CD4-positive, alpha-beta T cell (primary cell): ENCODE measurements at regions of chr10 and their contacts with region 1.

Region 1: DNA sequence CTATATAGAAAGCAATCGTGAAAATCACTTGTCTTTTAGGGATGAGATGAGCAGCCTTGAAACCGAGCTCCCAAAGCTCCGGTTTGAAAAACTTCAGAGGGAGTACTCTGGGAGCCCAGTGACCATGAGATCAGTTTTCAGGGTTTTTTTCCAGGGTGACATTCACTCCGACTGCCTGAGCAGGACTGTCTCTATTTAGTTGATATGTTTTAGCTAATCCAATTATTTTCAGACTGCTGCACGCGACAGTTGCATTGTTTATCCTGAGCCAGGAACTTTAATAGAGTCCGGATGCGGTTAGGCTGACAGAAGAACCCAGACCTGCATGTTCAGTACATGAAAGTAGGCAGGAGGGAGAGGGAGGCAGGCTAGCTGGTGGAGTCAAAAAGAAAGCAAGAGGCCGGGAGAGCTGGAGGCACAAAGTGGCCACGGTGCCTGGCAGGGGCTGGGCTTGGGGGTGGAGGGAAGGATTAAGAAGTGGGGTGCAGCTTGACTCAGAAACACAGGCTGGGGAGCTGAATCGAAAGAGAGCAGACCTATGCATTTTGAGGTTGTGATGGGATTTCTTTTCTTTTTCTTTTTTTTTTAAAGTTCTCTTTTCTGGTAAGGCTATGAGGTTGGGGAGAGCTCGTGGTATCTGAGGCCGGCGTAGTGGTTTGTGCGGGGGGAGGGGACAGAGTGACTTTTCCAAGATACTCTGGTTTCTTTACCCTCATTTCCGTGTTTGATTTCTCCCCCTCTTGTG is 5.6 kb downstream of the GATA3 start:
- DNase-seq: peak in 10 of 14 experiments; percentile 47 to 88 (median 63)
- ATAC-seq: peak; percentile 51
- H3K4me3 ChIP-seq: peak overlapping the region; percentile 96
- H3K4me3 Mint-ChIP-seq: peak overlapping the region; percentile 94
- H3K27ac ChIP-seq: peak overlapping the region; percentile 69 to 76
- H3K27ac Mint-ChIP-seq: peak overlapping the region; percentile 97
- H3K4me1 ChIP-seq: peaks cover 73% of the 10 kb centered on the region
- H3K4me1 Mint-ChIP-seq: peaks cover 81% of the 10 kb centered on the region
- H3K27me3 ChIP-seq: no peaks in the 10 kb centered on the region
- H3K27me3 Mint-ChIP-seq: no peaks in the 10 kb centered on the region
- CTCF ChIP-seq: no peak

Region 2: GRCh38 chr10:7818295-7819122 is 241.6 kb before region 1 on chr10 and contains the start of gene TAF3:
- CTCF ChIA-PET with region 1: no interaction called
- POLR2A ChIA-PET with region 1: no interaction called
- intact Hi-C with region 1: loop called in 1 of 2 experiments (anchors 5 kb)
- DNase-seq: peak; percentile 86 to 95 (median 91)
- ATAC-seq: peak; percentile 93
- H3K4me3 ChIP-seq: peak within 1 kb of the TSS; percentile 99
- H3K4me3 Mint-ChIP-seq: peak within 1 kb of the TSS; percentile 97
- H3K27ac ChIP-seq: peak within 1 kb of the TSS; percentile 29 to 50
- H3K27ac Mint-ChIP-seq: peak within 1 kb of the TSS; percentile 80
- H3K4me1 ChIP-seq: peaks cover 25% of the 10 kb centered on the region
- H3K4me1 Mint-ChIP-seq: peaks cover 48% of the 10 kb centered on the region
- H3K27me3 ChIP-seq: peaks cover 0 to 8% of the 10 kb centered on the region in 2 experiments
- H3K27me3 Mint-ChIP-seq: peaks cover 5% of the 10 kb centered on the region
- CTCF ChIP-seq: no peak
- total RNA-seq, gene TAF3: 12.6 to 12.8 TPM

Region 3: GRCh38 chr10:8073691-8074391 is 13.7 kb after region 1 on chr10:
- CTCF ChIA-PET with region 1: interaction called, 5 read pairs
- POLR2A ChIA-PET with region 1: interaction called, 15 read pairs
- intact Hi-C with region 1: loop called in 1 of 2 experiments (anchors 2 kb)
- DNase-seq: no peak
- ATAC-seq: no peak
- H3K4me3 ChIP-seq: no peak overlapping the region
- H3K4me3 Mint-ChIP-seq: no peak overlapping the region
- H3K27ac ChIP-seq: no peak overlapping the region
- H3K27ac Mint-ChIP-seq: peak overlapping the region; percentile 10
- H3K4me1 ChIP-seq: peaks cover 29% of the 10 kb centered on the region
- H3K4me1 Mint-ChIP-seq: peaks cover 68% of the 10 kb centered on the region
- H3K27me3 ChIP-seq: no peaks in the 10 kb centered on the region
- H3K27me3 Mint-ChIP-seq: no peaks in the 10 kb centered on the region
- CTCF ChIP-seq: no peak

Region 4: DNA sequence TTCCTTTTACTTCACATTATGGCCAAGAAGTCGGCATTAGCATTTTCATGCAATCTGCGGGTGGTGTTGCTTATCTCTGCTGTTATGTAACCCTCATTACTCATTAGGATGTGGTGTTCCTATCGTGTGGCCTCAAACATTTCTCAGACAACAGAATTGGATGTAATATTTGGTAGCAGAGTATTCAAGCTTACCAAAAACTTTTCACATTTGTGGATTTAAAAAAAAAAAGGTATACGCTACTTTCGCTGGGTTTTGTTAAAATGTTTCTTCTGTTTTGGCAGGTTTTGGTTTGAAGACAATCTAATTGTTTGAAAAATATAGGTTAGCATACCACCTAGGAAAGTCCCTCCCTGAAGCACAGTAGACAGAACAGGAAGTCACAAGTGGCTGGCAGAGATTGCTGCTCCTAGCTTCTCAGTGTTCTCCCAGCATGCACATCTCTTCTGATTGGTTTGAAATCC is 123.1 kb after region 1 on chr10:
- CTCF ChIA-PET with region 1: no interaction called
- POLR2A ChIA-PET with region 1: interaction called, 19 read pairs
- intact Hi-C with region 1: loop called in 1 of 2 experiments (anchors 5 kb)
- DNase-seq: peak in 12 of 14 experiments; percentile 8 to 90 (median 26)
- ATAC-seq: peak; percentile 92
- H3K4me3 ChIP-seq: peak overlapping the region; percentile 6
- H3K4me3 Mint-ChIP-seq: peak overlapping the region; percentile 72
- H3K27ac ChIP-seq: peak overlapping the region; percentile 29 to 78
- H3K27ac Mint-ChIP-seq: peak overlapping the region; percentile 94
- H3K4me1 ChIP-seq: peaks cover 23% of the 10 kb centered on the region
- H3K4me1 Mint-ChIP-seq: peaks cover 48% of the 10 kb centered on the region
- H3K27me3 ChIP-seq: no peaks in the 10 kb centered on the region
- H3K27me3 Mint-ChIP-seq: no peaks in the 10 kb centered on the region
- CTCF ChIP-seq: no peak

Region 5: DNA sequence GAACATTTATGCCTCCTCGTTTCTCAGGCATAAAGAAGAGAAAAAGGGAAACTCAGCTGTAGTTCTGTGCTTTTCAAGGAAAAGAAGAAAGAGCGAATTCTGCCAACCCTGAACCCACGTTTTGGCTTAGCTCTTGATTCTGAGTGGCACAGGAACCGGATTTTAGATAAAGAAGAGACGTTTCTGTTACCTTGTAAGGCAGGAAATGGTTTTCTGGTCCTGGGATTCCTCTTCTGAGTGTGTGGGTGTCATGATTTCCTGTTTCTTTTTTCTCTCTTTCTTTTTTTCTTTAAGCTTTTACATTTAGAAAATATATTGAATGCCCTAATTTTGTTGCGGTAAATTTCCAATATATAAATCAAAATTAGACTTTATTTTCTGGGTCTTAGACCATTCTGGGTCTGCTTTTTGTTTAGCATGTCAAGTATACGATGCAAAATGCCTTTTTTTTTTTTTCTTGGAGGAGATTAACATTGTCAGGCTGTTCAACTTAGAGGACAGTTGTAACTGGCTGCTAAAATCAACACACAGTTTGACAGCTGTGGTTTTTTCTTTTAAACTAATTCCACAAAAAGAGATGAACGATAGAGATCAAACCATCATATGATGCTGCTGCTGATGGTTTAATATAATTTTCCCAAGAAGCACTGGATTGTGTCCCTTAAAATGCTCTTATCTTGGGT is 185.1 kb after region 1 on chr10:
- CTCF ChIA-PET with region 1: no interaction called
- POLR2A ChIA-PET with region 1: interaction called, 14 read pairs
- intact Hi-C with region 1: loop called in 1 of 2 experiments (anchors 10 kb)
- DNase-seq: peak in 4 of 14 experiments; percentile 37 to 81 (median 69)
- ATAC-seq: peak; percentile 90
- H3K4me3 ChIP-seq: peak overlapping the region; percentile 1
- H3K4me3 Mint-ChIP-seq: peak overlapping the region; percentile 79
- H3K27ac ChIP-seq: peak overlapping the region; percentile 32 to 72
- H3K27ac Mint-ChIP-seq: peak overlapping the region; percentile 92
- H3K4me1 ChIP-seq: peaks cover 44% of the 10 kb centered on the region
- H3K4me1 Mint-ChIP-seq: peaks cover 77% of the 10 kb centered on the region
- H3K27me3 ChIP-seq: no peaks in the 10 kb centered on the region
- H3K27me3 Mint-ChIP-seq: no peaks in the 10 kb centered on the region
- CTCF ChIP-seq: no peak

Region 6: GRCh38 chr10:8404391-8405120 is 344.4 kb after region 1 on chr10:
- CTCF ChIA-PET with region 1: no interaction called
- POLR2A ChIA-PET with region 1: interaction called, 25 read pairs
- intact Hi-C with region 1: loop called (anchors 2 to 5 kb)
- DNase-seq: peak in 9 of 14 experiments; percentile 5 to 94 (median 38)
- ATAC-seq: peak; percentile 75
- H3K4me3 ChIP-seq: peak overlapping the region; percentile 14
- H3K4me3 Mint-ChIP-seq: peak overlapping the region; percentile 74
- H3K27ac ChIP-seq: peak overlapping the region; percentile 68 to 83
- H3K27ac Mint-ChIP-seq: peak overlapping the region; percentile 82
- H3K4me1 ChIP-seq: peaks cover 65% of the 10 kb centered on the region
- H3K4me1 Mint-ChIP-seq: peaks cover 77% of the 10 kb centered on the region
- H3K27me3 ChIP-seq: no peaks in the 10 kb centered on the region
- H3K27me3 Mint-ChIP-seq: no peaks in the 10 kb centered on the region
- CTCF ChIP-seq: no peak